Activated T-helper 1 cell treated with anti-CD3 and anti-CD28 coated beads, Interleukin-12 subunit alpha, Interleukin-12 subunit beta, Interleukin-2, Interleukin-4 antibody, amounts not matched to agents 30 ng/mL and 10 ng/mL and 1 ng/mL, durations not matched to agents 14 hours and 24 hours and 36 hours (primary cell): ENCODE measurements at regions of chr14 and their contacts with region 1.

Region 1: GRCh38 chr14:61598980-61599379 is 96.3 kb upstream of the HIF1A start:
- DNase-seq: peak; percentile 34
- H3K4me3 Mint-ChIP-seq: peak overlapping the region; percentile 45
- H3K27ac Mint-ChIP-seq: peak overlapping the region; percentile 85
- H3K4me1 Mint-ChIP-seq: peaks cover 73% of the 10 kb centered on the region
- H3K27me3 Mint-ChIP-seq: no peaks in the 10 kb centered on the region

Region 2: DNA sequence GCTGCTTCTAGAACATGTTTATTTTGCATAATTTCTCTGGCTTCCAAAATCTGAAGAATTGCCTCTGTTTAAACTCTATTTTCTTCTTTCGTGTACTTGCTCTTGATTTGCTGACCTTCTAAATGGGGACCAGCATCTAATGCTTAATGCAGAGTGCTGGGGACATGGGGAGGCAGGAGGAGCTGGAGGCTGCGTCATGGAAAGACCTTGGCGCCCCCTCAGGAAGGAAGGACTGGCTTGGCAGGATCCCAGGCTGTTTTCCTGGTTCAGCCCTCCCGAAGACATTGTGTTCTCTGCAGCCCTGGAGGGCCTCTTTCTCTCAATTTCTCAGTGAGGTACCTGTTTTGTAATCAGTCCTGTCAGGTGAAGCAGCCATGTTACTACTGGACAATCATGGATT is 272.1 kb before region 1 on chr14:
- intact Hi-C with region 1: loop called (anchors 2 kb)
- DNase-seq: no peak
- H3K4me3 Mint-ChIP-seq: peak overlapping the region; percentile 93
- H3K27ac Mint-ChIP-seq: peak overlapping the region; percentile 86
- H3K4me1 Mint-ChIP-seq: peaks cover 77% of the 10 kb centered on the region
- H3K27me3 Mint-ChIP-seq: no peaks in the 10 kb centered on the region

Region 3: DNA sequence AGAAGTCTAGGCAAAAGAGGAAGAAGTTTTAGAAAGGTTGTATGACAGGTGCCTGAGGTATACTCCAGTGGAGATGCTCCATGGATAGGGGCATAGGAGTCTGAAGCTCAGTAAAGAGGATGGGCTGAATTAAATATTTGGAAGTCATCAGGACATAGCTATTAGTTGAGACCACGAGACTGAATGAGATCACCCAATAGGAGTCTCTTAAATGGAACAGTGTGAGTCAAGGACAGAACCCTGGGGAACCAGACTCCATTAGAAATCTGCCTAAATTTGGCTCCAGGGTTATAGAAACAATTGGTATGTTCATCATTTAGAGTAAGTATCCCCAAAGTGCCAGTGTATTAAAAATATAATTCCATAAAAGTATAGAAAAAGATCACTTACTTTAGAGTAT is 105.0 kb before region 1 on chr14:
- intact Hi-C with region 1: no loop called
- DNase-seq: no peak
- H3K4me3 Mint-ChIP-seq: no peak overlapping the region
- H3K27ac Mint-ChIP-seq: no peak overlapping the region
- H3K4me1 Mint-ChIP-seq: peaks cover 25% of the 10 kb centered on the region
- H3K27me3 Mint-ChIP-seq: no peaks in the 10 kb centered on the region

Region 4: DNA sequence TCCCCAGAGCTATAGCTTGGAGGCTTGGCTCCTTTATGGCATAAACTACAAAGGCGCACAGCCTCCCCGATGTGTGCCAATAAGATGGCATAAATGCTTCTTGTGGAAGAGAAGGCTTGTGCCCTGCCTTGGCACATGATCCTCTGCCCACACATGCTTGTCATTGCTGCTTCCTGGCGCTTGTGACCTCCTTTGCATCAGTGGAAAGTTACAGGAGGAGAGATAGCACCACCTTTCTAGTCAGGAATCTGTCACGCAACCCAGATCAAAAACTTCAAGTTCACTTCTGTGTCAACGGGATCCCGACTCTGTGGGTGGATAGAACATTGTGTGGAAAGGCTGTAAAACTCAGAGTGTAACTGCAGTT is 87.4 kb before region 1 on chr14:
- intact Hi-C with region 1: loop called (anchors 2 kb)
- DNase-seq: peak; percentile 13
- H3K4me3 Mint-ChIP-seq: peak overlapping the region; percentile 64
- H3K27ac Mint-ChIP-seq: peak overlapping the region; percentile 88
- H3K4me1 Mint-ChIP-seq: peaks cover 83% of the 10 kb centered on the region
- H3K27me3 Mint-ChIP-seq: no peaks in the 10 kb centered on the region

Region 5: GRCh38 chr14:61568572-61569131 is 30.3 kb before region 1 on chr14:
- intact Hi-C with region 1: loop called (anchors 2 kb)
- DNase-seq: peak; percentile 55
- H3K4me3 Mint-ChIP-seq: peak overlapping the region; percentile 75
- H3K27ac Mint-ChIP-seq: peak overlapping the region; percentile 66
- H3K4me1 Mint-ChIP-seq: peaks cover 94% of the 10 kb centered on the region
- H3K27me3 Mint-ChIP-seq: no peaks in the 10 kb centered on the region

Region 6: DNA sequence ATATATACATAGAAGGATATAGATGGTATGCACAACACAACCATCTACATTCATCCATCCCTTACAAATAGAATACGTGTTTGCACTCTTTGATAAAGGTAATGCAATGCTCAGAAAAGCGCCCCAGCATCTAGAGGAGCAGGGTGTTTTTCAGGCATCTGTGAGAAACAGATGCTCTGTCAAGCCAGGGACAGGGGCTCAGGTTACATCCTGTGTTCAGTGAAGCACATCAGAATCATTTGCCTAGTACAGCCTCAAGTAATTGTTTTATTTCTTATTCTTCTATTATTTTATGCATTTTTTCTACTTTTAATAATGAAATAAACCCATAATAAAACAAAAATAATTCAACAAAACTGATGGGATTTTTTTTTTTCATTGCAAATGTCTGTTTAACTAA is 45.9 kb after region 1 on chr14:
- intact Hi-C with region 1: loop called (anchors 5 kb)
- DNase-seq: no peak
- H3K4me3 Mint-ChIP-seq: no peak overlapping the region
- H3K27ac Mint-ChIP-seq: no peak overlapping the region
- H3K4me1 Mint-ChIP-seq: peaks cover 23% of the 10 kb centered on the region
- H3K27me3 Mint-ChIP-seq: peaks cover 2% of the 10 kb centered on the region

Region 7: DNA sequence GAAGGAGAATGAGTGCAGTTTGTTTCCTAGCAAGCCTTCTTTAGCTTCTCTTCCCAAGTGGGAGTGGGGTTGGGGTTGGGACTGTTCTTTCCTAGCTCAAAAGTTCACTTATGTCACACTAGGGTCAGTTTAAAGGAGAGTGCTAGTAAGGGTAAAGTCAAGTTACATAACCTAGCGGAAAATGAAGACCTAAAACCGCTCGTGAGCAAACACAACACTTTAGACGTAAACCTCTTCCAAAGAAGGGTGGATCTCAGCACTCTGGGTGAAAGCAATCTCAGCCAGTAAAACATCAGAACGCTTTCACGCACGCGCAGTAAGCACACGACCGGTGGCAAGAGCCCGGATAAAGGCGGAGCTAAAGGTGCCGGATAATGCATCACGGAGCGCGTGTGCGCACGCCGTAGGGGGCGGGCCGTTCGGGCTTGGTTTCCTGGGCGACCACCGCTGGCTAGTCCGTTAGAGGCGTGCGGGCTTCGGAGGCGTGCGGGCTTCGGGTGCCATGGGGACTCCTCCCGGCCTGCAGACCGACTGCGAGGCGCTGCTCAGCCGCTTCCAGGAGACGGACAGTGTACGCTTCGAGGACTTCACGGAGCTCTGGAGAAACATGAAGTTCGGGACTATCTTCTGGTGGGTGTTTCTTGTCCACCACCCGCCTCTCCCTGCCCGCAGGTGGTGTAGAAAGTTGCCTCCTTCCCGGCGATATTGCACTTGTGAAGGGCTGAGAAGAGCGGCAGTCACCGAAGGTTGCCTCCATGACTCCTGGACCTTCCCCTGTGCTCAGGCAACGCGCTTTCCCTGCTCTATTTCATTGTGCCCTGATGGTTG is 163.2 kb after region 1 on chr14 and contains the start of gene SNAPC1:
- intact Hi-C with region 1: loop called (anchors 1 kb)
- DNase-seq: peak; percentile 97
- H3K4me3 Mint-ChIP-seq: peak within 1 kb of the TSS; percentile 91
- H3K27ac Mint-ChIP-seq: peak within 1 kb of the TSS; percentile 90
- H3K4me1 Mint-ChIP-seq: peaks cover 59% of the 10 kb centered on the region
- H3K27me3 Mint-ChIP-seq: peaks cover 3% of the 10 kb centered on the region
- total RNA-seq, gene SNAPC1: 10.8 and 11.0 TPM in 2 replicates